PC-3 (cell line): ENCODE measurements at regions of chr7 and their contacts with region 1.

Region 1: GRCh38 chr7:17706734-17707133 is 233.6 kb downstream of the SNX13 start:
- DNase-seq: peak; percentile 77
- ATAC-seq: peak; percentile 97
- H3K4me3 ChIP-seq: no peak overlapping the region
- H3K27ac ChIP-seq: no peak overlapping the region
- H3K4me1 ChIP-seq: no peaks in the 10 kb centered on the region; the same call in 1 of the 2 replicates
- H3K27me3 ChIP-seq: no peaks in the 10 kb centered on the region
- CTCF ChIP-seq: peak; percentile 86

Region 2: GRCh38 chr7:17668122-17668521 is 38.6 kb before region 1 on chr7:
- CTCF ChIA-PET with region 1: no interaction called
- POLR2A ChIA-PET with region 1: no interaction called
- intact Hi-C with region 1: no loop called
- DNase-seq: no peak
- ATAC-seq: no peak
- H3K4me3 ChIP-seq: no peak overlapping the region
- H3K27ac ChIP-seq: no peak overlapping the region
- H3K4me1 ChIP-seq: peaks cover 4% of the 10 kb centered on the region; the same call in 1 of the 2 replicates
- H3K27me3 ChIP-seq: no peaks in the 10 kb centered on the region
- CTCF ChIP-seq: no peak

Region 3: GRCh38 chr7:17680943-17681351 is 25.8 kb before region 1 on chr7:
- CTCF ChIA-PET with region 1: no interaction called
- POLR2A ChIA-PET with region 1: no interaction called
- intact Hi-C with region 1: loop called (anchors 2 kb)
- DNase-seq: peak; percentile 79
- ATAC-seq: peak; percentile 29
- H3K4me3 ChIP-seq: peak overlapping the region; percentile 47; the same call in 1 of the 2 replicates
- H3K27ac ChIP-seq: peak overlapping the region; percentile 72
- H3K4me1 ChIP-seq: peaks cover 49% of the 10 kb centered on the region
- H3K27me3 ChIP-seq: no peaks in the 10 kb centered on the region
- CTCF ChIP-seq: peak; percentile 79

Region 4: DNA sequence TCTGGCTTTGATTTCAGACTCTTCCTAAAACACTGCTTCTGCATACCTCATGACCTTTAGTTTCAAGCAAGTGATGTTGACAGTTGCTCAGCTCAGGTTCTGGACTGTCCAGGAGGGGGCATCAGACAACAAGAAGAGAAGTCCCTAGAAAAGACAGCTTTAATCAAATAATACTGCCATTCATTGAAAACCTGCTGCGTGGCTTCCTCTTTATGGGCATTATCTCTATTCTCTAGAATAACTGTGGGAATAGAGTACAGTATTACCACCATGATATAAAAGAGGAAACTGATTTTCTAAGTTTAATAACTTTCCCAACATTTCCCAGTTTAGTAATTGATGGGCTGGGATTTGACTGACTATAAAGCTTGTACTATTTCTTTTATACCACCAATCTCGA is 63.2 kb after region 1 on chr7:
- CTCF ChIA-PET with region 1: interaction called, 13 read pairs
- POLR2A ChIA-PET with region 1: no interaction called
- intact Hi-C with region 1: loop called (anchors 2 kb)
- DNase-seq: peak; percentile 79
- ATAC-seq: peak; percentile 78
- H3K4me3 ChIP-seq: no peak overlapping the region
- H3K27ac ChIP-seq: no peak overlapping the region
- H3K4me1 ChIP-seq: peaks cover 21% of the 10 kb centered on the region
- H3K27me3 ChIP-seq: no peaks in the 10 kb centered on the region
- CTCF ChIP-seq: peak; percentile 92

Region 5: GRCh38 chr7:17971411-17971810 is 264.7 kb after region 1 on chr7:
- CTCF ChIA-PET with region 1: no interaction called
- POLR2A ChIA-PET with region 1: no interaction called
- intact Hi-C with region 1: loop called (anchors 2 kb)
- DNase-seq: peak; percentile 41
- ATAC-seq: no peak
- H3K4me3 ChIP-seq: no peak overlapping the region
- H3K27ac ChIP-seq: no peak overlapping the region
- H3K4me1 ChIP-seq: peaks cover 13% of the 10 kb centered on the region
- H3K27me3 ChIP-seq: no peaks in the 10 kb centered on the region
- CTCF ChIP-seq: peak; percentile 57

Region 6: DNA sequence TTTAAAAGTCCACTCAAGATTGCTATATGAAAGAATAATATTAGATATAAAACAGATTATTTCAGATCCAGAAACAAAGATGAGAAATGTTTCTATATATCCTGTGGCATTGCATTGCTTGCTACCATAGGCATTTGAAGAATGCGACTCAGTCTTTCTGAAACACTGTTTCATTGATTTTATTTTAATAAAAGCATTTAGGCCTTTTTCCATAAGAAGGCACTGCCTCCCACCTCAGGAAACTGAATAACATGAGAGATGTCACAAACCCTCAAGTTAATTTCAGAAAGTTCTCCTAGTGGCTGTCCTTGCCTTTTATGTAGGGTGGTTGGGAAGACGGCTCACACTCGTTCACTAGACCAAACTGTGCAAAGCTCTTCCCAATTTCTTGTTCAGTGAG is 297.6 kb after region 1 on chr7:
- CTCF ChIA-PET with region 1: interaction called, 10 read pairs
- POLR2A ChIA-PET with region 1: no interaction called
- intact Hi-C with region 1: no loop called
- DNase-seq: no peak
- ATAC-seq: no peak
- H3K4me3 ChIP-seq: no peak overlapping the region
- H3K27ac ChIP-seq: no peak overlapping the region
- H3K4me1 ChIP-seq: no peaks in the 10 kb centered on the region
- H3K27me3 ChIP-seq: no peaks in the 10 kb centered on the region
- CTCF ChIP-seq: no peak

Region 7: DNA sequence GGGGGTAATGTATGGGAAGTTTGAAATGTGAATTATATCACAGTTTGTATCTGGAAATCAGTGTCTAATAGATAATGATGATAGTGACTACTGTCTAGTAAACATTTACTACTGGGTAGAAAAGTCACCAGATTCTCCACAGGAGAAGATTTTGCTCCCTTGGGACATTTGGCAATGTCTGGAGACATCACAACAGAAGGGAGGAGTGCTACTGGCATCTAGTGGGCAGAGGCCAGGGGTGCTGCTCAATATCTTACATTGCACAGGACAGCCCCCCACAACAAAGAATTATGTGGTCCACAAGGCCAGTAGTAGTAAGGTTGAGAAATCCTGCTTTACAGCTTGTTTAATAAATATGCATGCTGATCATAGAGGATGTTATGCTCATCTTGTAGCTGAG is 413.3 kb after region 1 on chr7:
- CTCF ChIA-PET with region 1: interaction called, 3 read pairs
- POLR2A ChIA-PET with region 1: no interaction called
- intact Hi-C with region 1: loop called (anchors 10 kb)
- DNase-seq: peak; percentile 38
- ATAC-seq: peak; percentile 71
- H3K4me3 ChIP-seq: no peak overlapping the region
- H3K27ac ChIP-seq: no peak overlapping the region
- H3K4me1 ChIP-seq: no peaks in the 10 kb centered on the region
- H3K27me3 ChIP-seq: no peaks in the 10 kb centered on the region
- CTCF ChIP-seq: peak; percentile 64